Activated CD4-positive, alpha-beta memory T cell treated with anti-CD3 and anti-CD28 coated beads for 36 hours (primary cell): ENCODE measurements at regions of chr20 and their contacts with region 1.

Region 1: DNA sequence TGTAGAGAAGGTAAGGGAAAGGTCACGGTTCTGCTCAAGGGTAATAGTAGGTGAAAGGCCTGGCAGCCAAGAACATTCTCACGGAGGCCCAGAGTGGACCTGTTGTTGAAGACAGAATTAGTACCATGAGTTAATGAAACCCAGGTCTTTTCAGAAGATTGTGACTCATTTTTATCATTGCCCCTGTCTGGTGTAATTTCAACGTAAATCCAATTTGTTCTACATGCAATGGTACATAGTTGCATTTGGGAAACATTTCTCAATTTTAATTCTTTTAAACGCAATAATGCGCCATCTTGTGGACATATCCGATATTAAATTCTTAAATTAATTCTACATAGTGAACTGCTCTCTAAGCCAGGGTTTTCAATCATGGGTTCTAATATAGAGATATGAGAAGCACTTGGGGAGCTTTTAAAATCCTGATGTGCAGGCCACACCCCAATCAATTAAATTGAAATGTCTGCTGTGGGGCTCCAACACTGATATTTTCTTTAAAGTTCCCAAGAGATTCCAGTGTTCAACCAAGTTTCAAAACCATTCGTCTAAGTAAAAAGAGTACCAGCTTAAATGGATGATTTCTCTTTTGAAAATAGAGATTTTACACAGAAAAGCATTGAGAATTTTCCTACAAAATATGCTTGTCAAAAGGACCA is 257.4 kb downstream of the PLCB1 start:
- DNase-seq: no peak
- H3K4me3 Mint-ChIP-seq: no peak overlapping the region
- H3K27ac Mint-ChIP-seq: no peak overlapping the region
- H3K4me1 Mint-ChIP-seq: no peaks in the 10 kb centered on the region
- H3K27me3 Mint-ChIP-seq: no peaks in the 10 kb centered on the region

Region 2: GRCh38 chr20:8049310-8049709 is 340.2 kb before region 1 on chr20:
- CTCF ChIA-PET with region 1: interaction called, 64 read pairs
- POLR2A ChIA-PET with region 1: no interaction called
- intact Hi-C with region 1: loop called (anchors 5 kb)
- DNase-seq: no peak
- H3K4me3 Mint-ChIP-seq: no peak overlapping the region
- H3K27ac Mint-ChIP-seq: no peak overlapping the region
- H3K4me1 Mint-ChIP-seq: no peaks in the 10 kb centered on the region
- H3K27me3 Mint-ChIP-seq: peaks cover 4% of the 10 kb centered on the region

Region 3: GRCh38 chr20:8153281-8153908 is 236.1 kb before region 1 on chr20:
- CTCF ChIA-PET with region 1: no interaction called
- POLR2A ChIA-PET with region 1: no interaction called
- intact Hi-C with region 1: no loop called
- DNase-seq: no peak
- H3K4me3 Mint-ChIP-seq: no peak overlapping the region
- H3K27ac Mint-ChIP-seq: no peak overlapping the region
- H3K4me1 Mint-ChIP-seq: peaks cover 50% of the 10 kb centered on the region
- H3K27me3 Mint-ChIP-seq: no peaks in the 10 kb centered on the region

Region 4: DNA sequence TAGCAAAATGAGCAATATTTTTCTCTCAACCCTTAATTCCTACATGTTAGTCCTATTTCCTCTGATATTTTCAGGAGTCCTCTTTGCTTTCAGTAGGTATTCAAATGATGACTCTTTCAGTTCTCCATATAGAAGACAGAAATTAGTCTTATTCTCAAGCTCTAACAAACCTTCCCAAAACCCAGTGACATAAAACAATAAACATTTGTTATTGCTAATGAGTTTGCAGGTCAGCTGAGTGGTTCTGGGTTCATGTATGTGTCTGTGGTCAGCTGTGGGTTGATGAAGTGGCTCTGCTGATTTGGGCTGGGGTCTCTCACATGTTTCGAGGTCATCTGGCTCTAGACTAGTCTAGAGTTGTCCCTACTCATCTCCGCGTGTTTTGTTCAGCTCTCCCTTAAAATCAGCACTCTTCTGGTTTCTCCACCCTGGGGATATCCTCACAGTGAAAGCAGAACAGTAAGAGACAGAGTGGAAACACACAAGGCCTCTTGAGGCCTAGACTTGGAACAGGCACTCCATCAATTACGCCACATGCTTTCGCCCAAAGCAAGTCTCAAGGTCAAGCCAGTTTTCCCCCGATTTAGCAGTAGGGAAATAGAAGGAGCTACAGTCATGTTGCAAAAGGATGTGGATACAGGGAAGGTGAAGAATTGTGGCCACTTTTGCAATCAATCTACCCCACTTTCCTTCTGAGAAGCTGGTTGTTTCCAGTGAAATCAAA is 15.6 kb after region 1 on chr20:
- CTCF ChIA-PET with region 1: interaction called, 16 read pairs
- POLR2A ChIA-PET with region 1: no interaction called
- intact Hi-C with region 1: no loop called
- DNase-seq: no peak
- H3K4me3 Mint-ChIP-seq: no peak overlapping the region
- H3K27ac Mint-ChIP-seq: no peak overlapping the region
- H3K4me1 Mint-ChIP-seq: peaks cover under 1% of the 10 kb centered on the region
- H3K27me3 Mint-ChIP-seq: peaks cover 3% of the 10 kb centered on the region